ENCODE measurements at regions of chr10 and their contacts with region 1.

Region 1: DNA sequence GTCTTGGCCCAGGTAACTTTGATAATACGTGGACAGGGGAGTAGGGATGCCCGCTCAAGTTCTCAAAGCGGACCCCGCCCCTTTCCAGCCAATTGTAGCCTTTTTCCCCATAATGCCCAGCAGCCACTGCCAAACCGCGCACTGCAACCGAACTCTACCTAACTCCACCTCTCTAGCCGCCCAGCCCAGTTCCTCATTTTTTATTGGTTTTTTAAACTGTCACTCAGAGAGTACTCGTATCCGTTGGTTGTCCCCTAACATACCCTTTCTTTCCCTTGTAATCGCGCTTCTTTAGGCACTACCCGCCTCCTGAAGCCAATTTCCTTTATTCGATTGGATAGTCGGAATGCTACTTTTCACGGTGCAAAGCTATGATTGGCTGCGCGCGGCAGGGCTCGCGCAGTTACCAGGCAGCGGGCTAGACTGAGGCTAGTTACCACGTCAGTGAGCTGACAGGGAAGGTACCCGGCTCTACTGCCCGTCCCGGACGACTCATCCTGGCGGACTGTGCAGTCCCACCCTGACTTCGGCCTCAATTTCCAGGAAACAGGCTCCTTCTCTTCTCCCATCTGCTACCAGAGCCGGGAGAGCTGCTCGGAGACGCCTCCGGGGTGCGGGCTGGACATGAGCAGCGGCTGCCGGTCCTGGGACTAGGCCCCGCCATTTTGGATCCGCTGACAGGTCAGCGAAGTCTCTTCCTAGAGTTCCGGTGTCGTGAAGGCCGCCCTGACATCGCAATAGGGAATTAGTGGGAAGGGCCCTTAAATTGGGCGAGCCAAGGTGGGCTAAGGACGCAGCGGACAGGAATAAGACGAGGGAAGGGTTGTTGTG is at the start of gene GBF1:
- DNase-seq: peak; percentile 94
- ATAC-seq: peak; percentile 90
- H3K4me3 Mint-ChIP-seq: peak within 1 kb of the TSS; percentile 98
- H3K27ac Mint-ChIP-seq: peak within 1 kb of the TSS; percentile 81
- H3K4me1 Mint-ChIP-seq: peaks cover 44% of the 10 kb centered on the region
- H3K27me3 Mint-ChIP-seq: peaks cover 18% of the 10 kb centered on the region
- total RNA-seq, gene GBF1: 33.1 to 37.5 TPM

Region 2: GRCh38 chr10:102184606-102185005 is 60.7 kb before region 1 on chr10:
- CTCF ChIA-PET with region 1: no interaction called
- POLR2A ChIA-PET with region 1: no interaction called
- intact Hi-C with region 1: no loop called
- DNase-seq: no peak
- ATAC-seq: no peak
- H3K4me3 Mint-ChIP-seq: no peak overlapping the region
- H3K27ac Mint-ChIP-seq: no peak overlapping the region
- H3K4me1 Mint-ChIP-seq: peaks cover 12% of the 10 kb centered on the region
- H3K27me3 Mint-ChIP-seq: no peaks in the 10 kb centered on the region

Region 3: GRCh38 chr10:102268375-102268888 is 23.1 kb after region 1 on chr10:
- CTCF ChIA-PET with region 1: interaction called, 7 read pairs
- POLR2A ChIA-PET with region 1: interaction called, 9 read pairs
- intact Hi-C with region 1: loop called in 1 of 2 experiments (anchors 1 kb)
- DNase-seq: no peak
- ATAC-seq: peak; percentile 61
- H3K4me3 Mint-ChIP-seq: peak overlapping the region; percentile 48
- H3K27ac Mint-ChIP-seq: peak overlapping the region; percentile 94
- H3K4me1 Mint-ChIP-seq: peaks cover 57% of the 10 kb centered on the region
- H3K27me3 Mint-ChIP-seq: no peaks in the 10 kb centered on the region

Region 4: GRCh38 chr10:102432162-102432950 is 187.0 kb after region 1 on chr10 and contains the start of gene CUEDC2:
- CTCF ChIA-PET with region 1: no interaction called
- POLR2A ChIA-PET with region 1: no interaction called
- intact Hi-C with region 1: loop called in 1 of 2 experiments (anchors 1 kb)
- DNase-seq: peak; percentile 99
- ATAC-seq: peak; percentile 94
- H3K4me3 Mint-ChIP-seq: peak within 1 kb of the TSS; percentile 85
- H3K27ac Mint-ChIP-seq: peak within 1 kb of the TSS; percentile 94
- H3K4me1 Mint-ChIP-seq: peaks cover 42% of the 10 kb centered on the region
- H3K27me3 Mint-ChIP-seq: no peaks in the 10 kb centered on the region
- total RNA-seq, gene CUEDC2: 60.8 to 72.7 TPM

Region 5: DNA sequence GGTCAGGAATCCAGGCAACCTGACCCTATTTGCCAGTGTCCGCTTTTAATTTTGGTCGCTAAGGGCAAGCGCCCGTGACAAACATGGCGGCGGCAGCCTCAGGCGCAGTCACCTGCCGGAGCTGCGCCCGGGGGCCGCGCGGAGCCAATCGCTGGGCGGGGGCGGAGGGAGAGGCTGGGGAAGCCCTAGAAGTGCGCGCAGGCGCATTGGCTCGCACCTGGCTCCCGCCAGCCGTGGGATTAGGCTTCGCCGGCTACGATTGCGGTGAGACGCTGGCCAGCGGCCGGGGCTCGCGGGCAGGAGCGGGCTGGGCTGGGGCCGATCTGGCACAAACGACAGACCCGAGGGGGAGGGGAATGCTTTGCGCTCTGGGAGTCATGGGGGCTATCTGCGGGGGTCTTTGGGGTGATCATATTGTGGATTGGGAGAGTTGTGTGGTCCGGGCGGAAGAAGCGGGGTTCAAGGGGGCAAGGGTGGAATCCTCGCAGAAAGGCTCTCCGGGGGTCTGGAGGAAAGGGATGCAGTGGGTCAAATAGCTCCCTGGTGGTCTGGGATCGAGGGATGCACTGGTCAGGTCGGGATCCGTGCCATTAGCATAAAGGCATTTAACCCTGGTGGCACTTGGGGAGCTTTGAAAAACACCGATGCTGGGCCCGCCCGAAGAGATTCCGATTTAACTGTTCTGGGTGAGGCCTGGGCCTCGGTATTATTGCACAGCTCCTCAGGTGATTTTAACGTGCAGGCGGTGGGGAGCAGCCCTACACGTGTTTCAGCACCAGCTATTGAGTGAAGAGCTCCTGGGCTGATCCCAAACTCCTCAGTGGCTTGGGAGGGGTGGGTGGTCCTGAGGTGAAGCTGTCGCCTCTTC is 216.1 kb after region 1 on chr10:
- CTCF ChIA-PET with region 1: no interaction called
- POLR2A ChIA-PET with region 1: interaction called, 3 read pairs
- intact Hi-C with region 1: loop called in 1 of 2 experiments (anchors 1 kb)
- DNase-seq: peak; percentile 97
- ATAC-seq: peak; percentile 98
- H3K4me3 Mint-ChIP-seq: peak overlapping the region; percentile 85
- H3K27ac Mint-ChIP-seq: peak overlapping the region; percentile 73
- H3K4me1 Mint-ChIP-seq: peaks cover 27% of the 10 kb centered on the region
- H3K27me3 Mint-ChIP-seq: no peaks in the 10 kb centered on the region

Region 6: DNA sequence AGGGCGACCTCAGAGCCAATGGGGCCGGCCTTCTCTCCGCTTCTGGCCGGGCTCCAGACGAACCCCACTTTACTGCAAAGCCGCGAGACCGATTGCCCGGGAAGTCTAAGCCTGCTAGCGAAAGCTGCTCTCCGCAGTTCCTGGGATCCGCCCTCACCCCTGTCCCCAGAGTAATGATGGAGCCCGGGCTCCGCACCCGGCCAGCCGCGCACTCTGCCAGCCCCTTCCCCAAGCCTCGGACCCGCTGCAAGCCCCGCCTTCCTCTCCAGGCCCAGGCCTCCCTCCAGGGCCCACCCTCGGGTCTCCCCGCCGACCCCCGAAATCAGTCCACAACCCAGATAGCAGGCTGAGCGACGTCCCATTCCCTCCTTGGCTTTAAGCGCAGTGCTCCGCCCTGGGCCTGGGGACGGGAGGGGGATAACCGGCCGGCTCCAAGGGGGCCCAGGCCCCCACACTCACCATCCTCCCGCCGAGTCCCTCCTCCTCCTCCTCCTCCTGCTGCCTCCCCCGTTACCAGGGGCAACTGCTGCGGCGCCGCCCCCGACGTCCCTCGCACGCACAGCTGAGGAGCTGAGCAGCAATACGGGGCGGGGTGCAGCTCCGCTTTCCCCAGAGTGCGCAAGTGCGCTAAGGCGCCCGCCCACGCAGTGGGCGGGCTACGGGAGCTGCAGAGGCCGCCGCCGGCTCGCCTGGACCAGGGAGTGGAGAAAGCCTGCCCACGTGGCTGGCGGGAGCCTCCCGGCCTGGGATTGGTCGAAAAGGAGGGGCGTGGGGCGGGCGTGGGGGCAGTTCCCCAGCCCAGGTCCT is 468.7 kb after region 1 on chr10 and contains the start of gene ARL3:
- CTCF ChIA-PET with region 1: no interaction called
- POLR2A ChIA-PET with region 1: no interaction called
- intact Hi-C with region 1: loop called in 1 of 2 experiments (anchors 1 kb)
- DNase-seq: peak; percentile 99
- ATAC-seq: peak; percentile 90
- H3K4me3 Mint-ChIP-seq: peak within 1 kb of the TSS; percentile 82
- H3K27ac Mint-ChIP-seq: peak within 1 kb of the TSS; percentile 81
- H3K4me1 Mint-ChIP-seq: peaks cover 59% of the 10 kb centered on the region
- H3K27me3 Mint-ChIP-seq: no peaks in the 10 kb centered on the region
- total RNA-seq, gene ARL3: 6.4 to 6.9 TPM

Region 7: DNA sequence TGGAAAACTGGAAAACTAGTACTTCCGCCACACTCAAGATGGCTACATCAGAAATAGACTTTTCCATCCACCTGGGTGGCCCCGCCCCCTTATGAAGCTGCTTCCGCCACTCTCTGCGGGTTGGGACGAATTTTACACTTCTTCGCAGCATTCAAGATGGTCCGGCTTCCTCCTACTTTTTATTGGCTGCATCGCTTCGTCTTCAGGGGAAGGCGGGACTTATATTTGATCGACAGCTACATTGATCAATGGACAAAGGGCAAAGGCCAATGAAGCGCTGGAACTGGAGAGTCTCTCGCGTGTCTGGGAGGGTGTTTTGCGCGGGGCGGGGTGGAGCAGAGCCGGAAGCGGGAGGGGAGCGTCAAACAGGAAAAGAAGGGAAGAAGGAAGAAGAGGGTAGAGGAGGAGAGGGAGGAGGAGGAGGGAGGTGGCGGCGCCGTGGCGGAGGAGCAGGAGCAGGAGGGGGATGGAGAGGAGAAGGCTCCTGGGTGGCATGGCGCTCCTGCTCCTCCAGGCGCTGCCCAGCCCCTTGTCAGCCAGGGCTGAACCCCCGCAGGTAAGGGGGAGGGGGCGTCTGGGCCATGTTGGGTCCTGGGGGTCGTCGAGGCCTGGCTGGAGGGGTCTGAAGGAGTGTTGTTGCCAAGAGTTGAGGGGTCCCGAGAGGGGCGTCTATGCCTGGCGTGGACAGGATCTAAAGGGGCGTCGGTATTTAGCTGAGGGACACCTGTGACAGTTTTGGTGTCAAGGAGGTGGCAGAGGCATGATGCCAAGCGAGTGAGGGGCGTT is 498.5 kb after region 1 on chr10 and contains the start of gene WBP1L:
- CTCF ChIA-PET with region 1: no interaction called
- POLR2A ChIA-PET with region 1: no interaction called
- intact Hi-C with region 1: loop called in 1 of 2 experiments (anchors 1 kb)
- DNase-seq: peak; percentile 96
- ATAC-seq: peak; percentile 98
- H3K4me3 Mint-ChIP-seq: peak within 1 kb of the TSS; percentile 92
- H3K27ac Mint-ChIP-seq: peak within 1 kb of the TSS; percentile 82
- H3K4me1 Mint-ChIP-seq: peaks cover 42% of the 10 kb centered on the region
- H3K27me3 Mint-ChIP-seq: no peaks in the 10 kb centered on the region
- total RNA-seq, gene WBP1L: 14.9 to 16.4 TPM

Region 8: DNA sequence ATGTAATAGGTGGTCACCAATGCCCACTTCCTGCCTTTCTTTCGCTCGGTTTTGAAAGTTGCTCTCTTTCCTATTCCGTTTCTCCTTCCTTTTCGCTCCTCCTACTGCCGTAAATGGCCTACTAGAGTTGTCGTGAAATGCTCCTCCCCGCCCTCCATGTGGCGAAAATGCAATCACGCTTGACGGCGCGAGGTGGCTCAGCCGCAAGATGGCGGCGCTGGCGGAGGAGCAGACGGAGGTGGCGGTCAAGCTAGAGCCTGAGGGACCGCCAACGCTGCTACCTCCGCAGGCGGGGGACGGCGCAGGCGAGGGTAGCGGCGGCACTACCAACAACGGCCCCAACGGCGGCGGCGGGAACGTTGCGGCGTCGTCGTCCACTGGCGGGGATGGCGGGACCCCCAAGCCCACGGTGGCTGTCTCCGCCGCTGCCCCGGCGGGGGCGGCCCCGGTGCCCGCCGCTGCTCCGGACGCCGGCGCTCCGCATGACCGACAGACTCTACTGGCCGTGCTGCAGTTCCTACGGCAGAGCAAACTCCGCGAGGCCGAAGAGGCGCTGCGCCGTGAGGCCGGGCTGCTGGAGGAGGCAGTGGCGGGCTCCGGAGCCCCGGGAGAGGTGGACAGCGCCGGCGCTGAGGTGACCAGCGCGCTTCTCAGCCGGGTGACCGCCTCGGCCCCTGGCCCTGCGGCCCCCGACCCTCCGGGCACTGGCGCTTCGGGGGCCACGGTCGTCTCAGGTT is 1122.6 kb after region 1 on chr10 and contains the start of gene TAF5:
- CTCF ChIA-PET with region 1: no interaction called
- POLR2A ChIA-PET with region 1: no interaction called
- intact Hi-C with region 1: loop called in 1 of 2 experiments (anchors 10 kb)
- DNase-seq: peak; percentile 95
- ATAC-seq: peak; percentile 61
- H3K4me3 Mint-ChIP-seq: peak within 1 kb of the TSS; percentile 81
- H3K27ac Mint-ChIP-seq: peak within 1 kb of the TSS; percentile 85
- H3K4me1 Mint-ChIP-seq: peaks cover 16% of the 10 kb centered on the region
- H3K27me3 Mint-ChIP-seq: no peaks in the 10 kb centered on the region
- total RNA-seq, gene TAF5: 11.2 to 11.4 TPM

Measured in activated CD4-positive, alpha-beta T cell treated with anti-CD3 and anti-CD28 coated beads for 36 hours (primary cell).